Mucosa of descending colon (tissue), 3 donors: ENCODE measurements at regions of chr9 and their contacts with region 1.

Region 1: GRCh38 chr9:133992780-133993634 is 883 bp upstream of the VAV2 start:
- DNase-seq: peak; percentile 93 to 94 (median 93)
- ATAC-seq: peak; percentile 77
- H3K4me3 ChIP-seq: peak overlapping the region; percentile 46
- H3K4me1 ChIP-seq: peaks cover 25% of the 10 kb centered on the region
- CTCF ChIP-seq: no peak

Region 2: DNA sequence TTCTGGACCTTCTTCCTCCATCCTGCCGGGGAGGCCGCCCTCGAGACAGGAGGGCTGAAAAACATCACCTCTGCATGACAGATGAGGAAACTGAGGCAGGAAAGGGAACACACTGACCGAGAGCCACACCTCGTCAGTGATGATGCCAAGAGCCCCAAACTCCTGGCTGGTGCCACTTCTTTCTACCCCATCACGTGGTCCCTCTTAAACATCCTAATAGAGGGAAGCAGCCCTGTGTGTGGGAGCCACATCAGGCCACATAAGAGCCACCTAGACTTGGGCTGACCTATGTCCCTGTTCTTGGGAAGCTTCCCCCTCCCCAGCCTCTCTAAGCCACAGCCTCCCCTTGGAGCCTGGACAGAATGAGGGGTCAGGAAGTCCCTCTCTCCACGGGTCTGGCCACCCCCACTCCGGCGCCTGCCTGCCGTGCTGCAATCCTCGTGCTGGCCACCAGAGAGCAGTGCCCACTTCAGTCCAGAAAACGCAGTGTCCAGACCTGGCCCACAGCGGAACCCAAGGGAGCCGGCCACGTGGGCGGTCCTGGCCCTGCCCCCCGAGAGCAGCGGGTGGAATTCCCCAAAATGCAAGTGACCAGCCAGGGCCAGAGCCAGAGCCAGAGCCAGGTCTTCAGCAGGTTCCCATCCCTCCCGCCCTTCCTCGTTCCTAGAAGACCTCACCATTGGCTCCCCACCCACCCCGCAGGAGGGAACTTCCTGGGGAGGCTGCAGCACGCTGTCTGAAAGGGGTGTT is 200.1 kb before region 1 on chr9:
- intact Hi-C with region 1: loop called (anchors 5 kb)
- DNase-seq: peak; percentile 77 to 85 (median 77)
- ATAC-seq: peak; percentile 64
- H3K4me3 ChIP-seq: no peak overlapping the region
- H3K4me1 ChIP-seq: peaks cover 16% of the 10 kb centered on the region
- CTCF ChIP-seq: peak; percentile 85

Region 3: GRCh38 chr9:134253606-134254198 is 260.7 kb after region 1 on chr9:
- intact Hi-C with region 1: no loop called
- DNase-seq: no peak
- ATAC-seq: no peak
- H3K4me3 ChIP-seq: no peak overlapping the region
- H3K4me1 ChIP-seq: no peaks in the 10 kb centered on the region
- CTCF ChIP-seq: no peak